ENCODE measurements at regions of chr20 and their contacts with region 1.

Region 1: DNA sequence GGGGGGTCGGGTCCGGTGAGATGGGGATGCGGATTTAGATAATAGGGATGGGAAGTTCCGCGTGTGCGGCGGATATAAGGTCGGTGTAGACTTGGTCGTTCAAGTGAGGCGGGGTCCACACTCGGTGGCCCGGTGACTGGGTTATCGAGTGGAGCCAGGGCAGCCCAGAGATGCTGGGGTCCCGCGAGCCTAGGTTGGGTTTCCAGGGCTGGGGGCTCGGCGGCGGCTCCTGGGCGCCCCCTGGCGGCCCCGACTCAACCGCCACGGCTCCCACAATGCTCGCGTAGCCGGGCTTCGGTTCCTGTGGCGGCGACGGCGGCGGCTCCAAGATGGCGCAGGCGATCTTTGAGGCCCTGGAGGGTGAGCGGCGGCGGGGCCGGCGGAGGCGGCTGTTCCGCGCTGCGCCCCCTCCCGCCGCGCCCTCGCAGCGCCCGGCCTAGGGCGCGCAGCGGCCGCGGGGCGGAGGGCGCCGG is at the start of gene ZNF341:
- DNase-seq: peak; percentile 16
- ATAC-seq: peak; percentile 83
- H3K4me3 ChIP-seq: peak within 1 kb of the TSS; percentile 82
- H3K27ac ChIP-seq: peak within 1 kb of the TSS; percentile 77
- H3K4me1 ChIP-seq: peaks cover 7% of the 10 kb centered on the region
- H3K27me3 ChIP-seq: no peaks in the 10 kb centered on the region
- CTCF ChIP-seq: peak; percentile 79 to 89 (median 84)
- EP300 ChIP-seq: no peak
- POLR2A ChIP-seq: peak; percentile 57; the same call in 1 of the 2 replicates
- RAD21 ChIP-seq: peak; percentile 56
- polyA plus RNA-seq, gene ZNF341: 0.18 to 0.46 TPM

Region 2: GRCh38 chr20:33099842-33100538 is 631.7 kb before region 1 on chr20:
- CTCF ChIA-PET with region 1: no interaction called
- POLR2A ChIA-PET with region 1: no interaction called
- RAD21 ChIA-PET with region 1: no interaction called
- SMC1A ChIA-PET with region 1: no interaction called
- in situ Hi-C with region 1: no loop called
- intact Hi-C with region 1: no loop called
- DNase-seq: no peak
- ATAC-seq: no peak
- H3K4me3 ChIP-seq: no peak overlapping the region
- H3K27ac ChIP-seq: no peak overlapping the region
- H3K4me1 ChIP-seq: no peaks in the 10 kb centered on the region
- H3K27me3 ChIP-seq: no peaks in the 10 kb centered on the region
- CTCF ChIP-seq: no peak
- EP300 ChIP-seq: no peak
- POLR2A ChIP-seq: no peak
- RAD21 ChIP-seq: no peak

Region 3: DNA sequence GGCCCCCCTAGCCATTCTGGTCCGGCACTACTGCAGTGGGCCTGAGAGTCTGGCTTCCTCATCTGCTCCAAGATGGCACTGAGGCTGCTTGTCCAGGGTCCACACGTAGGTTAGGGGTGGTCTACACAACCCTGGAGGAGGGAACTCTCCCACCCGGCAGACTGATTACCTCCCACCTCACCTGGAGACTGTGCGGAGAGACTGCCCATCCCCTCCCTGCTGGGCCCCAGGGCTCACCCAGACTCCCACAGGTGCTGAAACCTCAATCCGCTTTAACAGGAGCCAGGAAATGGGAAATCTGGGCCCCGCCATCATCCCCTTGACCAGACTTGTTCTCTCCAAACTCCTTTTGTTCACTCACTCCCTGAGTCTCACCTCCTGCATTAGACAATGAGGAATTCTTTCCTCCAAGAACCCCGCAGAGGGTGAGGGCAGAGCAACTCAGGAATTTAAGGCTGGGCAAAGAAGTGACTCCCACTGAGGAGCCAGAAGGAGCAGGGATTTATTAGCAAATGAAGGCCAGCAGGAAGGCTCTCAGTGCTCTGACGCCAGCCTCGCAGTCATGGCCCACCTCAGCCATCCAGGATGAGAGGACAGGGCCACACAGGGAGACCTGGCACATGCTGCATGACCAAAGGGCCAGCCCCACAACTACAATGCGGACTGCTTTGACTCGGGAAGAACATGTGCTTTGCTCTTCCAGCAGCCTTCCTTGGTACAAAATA is 383.4 kb before region 1 on chr20:
- CTCF ChIA-PET with region 1: no interaction called
- POLR2A ChIA-PET with region 1: no interaction called
- RAD21 ChIA-PET with region 1: no interaction called
- SMC1A ChIA-PET with region 1: no interaction called
- in situ Hi-C with region 1: no loop called
- intact Hi-C with region 1: no loop called
- DNase-seq: no peak
- ATAC-seq: no peak
- H3K4me3 ChIP-seq: no peak overlapping the region
- H3K27ac ChIP-seq: no peak overlapping the region
- H3K4me1 ChIP-seq: no peaks in the 10 kb centered on the region
- H3K27me3 ChIP-seq: no peaks in the 10 kb centered on the region
- CTCF ChIP-seq: no peak
- EP300 ChIP-seq: no peak
- POLR2A ChIP-seq: no peak
- RAD21 ChIP-seq: no peak

Region 4: GRCh38 chr20:33460711-33461110 is 271.0 kb before region 1 on chr20:
- CTCF ChIA-PET with region 1: no interaction called
- POLR2A ChIA-PET with region 1: no interaction called
- RAD21 ChIA-PET with region 1: no interaction called
- SMC1A ChIA-PET with region 1: no interaction called
- in situ Hi-C with region 1: no loop called
- intact Hi-C with region 1: loop called (anchors 5 kb)
- DNase-seq: no peak
- ATAC-seq: peak; percentile 38
- H3K4me3 ChIP-seq: no peak overlapping the region
- H3K27ac ChIP-seq: no peak overlapping the region
- H3K4me1 ChIP-seq: no peaks in the 10 kb centered on the region
- H3K27me3 ChIP-seq: no peaks in the 10 kb centered on the region
- CTCF ChIP-seq: no peak
- EP300 ChIP-seq: no peak
- POLR2A ChIP-seq: no peak
- RAD21 ChIP-seq: no peak

Region 5: GRCh38 chr20:33653218-33653899 is 78.4 kb before region 1 on chr20:
- CTCF ChIA-PET with region 1: no interaction called
- POLR2A ChIA-PET with region 1: no interaction called
- RAD21 ChIA-PET with region 1: no interaction called
- SMC1A ChIA-PET with region 1: no interaction called
- in situ Hi-C with region 1: no loop called
- intact Hi-C with region 1: no loop called
- DNase-seq: no peak
- ATAC-seq: peak; percentile 82
- H3K4me3 ChIP-seq: no peak overlapping the region
- H3K27ac ChIP-seq: 0 out of 2 replicates have a peak overlapping the region, but pooled peaks have one; percentile 11
- H3K4me1 ChIP-seq: peaks cover 23% of the 10 kb centered on the region
- H3K27me3 ChIP-seq: peaks cover 0 to 2% of the 10 kb centered on the region in 2 experiments; a peak in 2 of 4 replicates
- CTCF ChIP-seq: peak; percentile 82 to 88 (median 87)
- EP300 ChIP-seq: no peak
- POLR2A ChIP-seq: no peak
- RAD21 ChIP-seq: peak; percentile 93

Region 6: DNA sequence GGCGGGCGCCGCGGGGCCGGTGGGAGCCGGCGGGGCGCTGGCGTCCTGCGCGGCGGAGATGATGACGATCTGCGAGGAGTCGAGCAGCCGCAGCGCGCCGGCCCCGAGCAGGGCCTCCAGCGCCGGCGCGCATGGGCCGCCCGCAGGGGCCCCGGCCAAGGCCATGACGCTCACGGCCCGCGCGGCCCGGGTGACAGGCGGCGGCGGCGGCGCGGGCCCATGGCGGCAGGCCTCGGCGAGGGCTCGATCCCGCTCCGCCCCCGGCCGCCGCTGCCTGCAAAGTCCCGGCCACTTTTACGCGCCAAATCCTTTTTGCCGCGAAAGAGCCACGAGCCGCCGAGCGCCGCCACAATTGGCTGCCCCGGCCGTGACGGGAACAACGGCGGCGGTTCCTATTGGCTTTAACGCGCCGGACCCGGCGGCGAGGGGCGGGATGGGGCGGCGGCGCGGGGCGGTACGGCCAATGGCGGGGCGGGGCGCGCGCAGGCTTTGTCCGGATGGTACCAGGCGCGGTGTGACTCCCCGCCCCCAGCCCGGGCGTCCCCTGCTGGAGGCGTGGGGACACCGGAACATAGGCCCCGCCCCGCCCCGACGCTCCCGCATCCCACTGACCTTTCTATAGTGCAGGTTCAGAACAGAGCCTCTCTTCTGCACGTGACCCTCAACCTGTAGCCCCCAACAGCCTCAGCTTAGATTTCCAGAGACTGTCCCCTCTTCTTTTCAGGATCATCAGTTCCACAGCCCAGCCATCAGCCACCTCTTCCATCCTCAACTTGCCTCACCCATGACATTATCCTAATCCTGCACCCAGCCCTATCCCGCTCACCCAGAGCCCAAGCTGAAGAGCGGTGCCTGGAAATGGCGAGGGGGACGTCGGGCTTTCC is 45.4 kb before region 1 on chr20 and contains the start of gene E2F1:
- CTCF ChIA-PET with region 1: interaction called, 4 read pairs
- POLR2A ChIA-PET with region 1: interaction called, 8 read pairs
- RAD21 ChIA-PET with region 1: interaction called, 3 read pairs
- SMC1A ChIA-PET with region 1: no interaction called
- in situ Hi-C with region 1: no loop called
- intact Hi-C with region 1: loop called (anchors 1 kb)
- DNase-seq: peak; percentile 61
- ATAC-seq: peak; percentile 95
- H3K4me3 ChIP-seq: peak within 1 kb of the TSS; percentile 79
- H3K27ac ChIP-seq: peak within 1 kb of the TSS; percentile 88
- H3K4me1 ChIP-seq: peaks cover 33% of the 10 kb centered on the region
- H3K27me3 ChIP-seq: no peaks in the 10 kb centered on the region
- CTCF ChIP-seq: peak in 2 of 3 experiments; percentile 21 to 28; a peak in 2 of 6 replicates
- EP300 ChIP-seq: no peak
- POLR2A ChIP-seq: peak; percentile 57; the same call in 1 of the 2 replicates
- RAD21 ChIP-seq: no peak
- polyA plus RNA-seq, gene E2F1: 0.29 to 2.1 TPM

Region 7: DNA sequence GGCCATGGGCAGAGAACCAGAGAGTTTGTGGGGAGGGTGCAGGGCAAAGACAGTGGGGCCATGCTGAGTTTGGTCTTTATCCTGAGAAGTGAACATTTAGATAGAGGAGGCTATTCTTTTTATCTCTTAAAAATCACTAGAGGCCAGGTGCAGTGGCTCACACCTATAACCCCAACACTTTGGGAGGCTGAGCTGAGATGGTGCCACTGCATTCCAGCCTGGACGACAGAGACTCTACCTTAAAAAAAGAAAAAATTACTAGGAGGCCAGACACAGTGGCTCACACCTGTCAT is 20.3 kb before region 1 on chr20:
- CTCF ChIA-PET with region 1: no interaction called
- POLR2A ChIA-PET with region 1: no interaction called
- RAD21 ChIA-PET with region 1: no interaction called
- SMC1A ChIA-PET with region 1: no interaction called
- in situ Hi-C with region 1: no loop called
- intact Hi-C with region 1: no loop called
- DNase-seq: no peak
- ATAC-seq: no peak
- H3K4me3 ChIP-seq: no peak overlapping the region
- H3K27ac ChIP-seq: no peak overlapping the region
- H3K4me1 ChIP-seq: no peaks in the 10 kb centered on the region
- H3K27me3 ChIP-seq: no peaks in the 10 kb centered on the region
- CTCF ChIP-seq: no peak
- EP300 ChIP-seq: no peak
- POLR2A ChIP-seq: no peak
- RAD21 ChIP-seq: no peak